ENCODE measurements at regions of chr12 and their contacts with region 1.

Region 1: GRCh38 chr12:52949413-52950331 is 754 bp downstream of the KRT18 start:
- DNase-seq: peak in 1 of 2 experiments; percentile 62
- H3K4me3 ChIP-seq: peak overlapping the region; percentile 88 to 98 (median 93)
- H3K27ac ChIP-seq: peak overlapping the region; percentile 83
- H3K4me1 ChIP-seq: peaks cover 18 to 38% (median 29%) of the 10 kb centered on the region in 4 experiments
- H3K27me3 ChIP-seq: no peaks in the 10 kb centered on the region
- CTCF ChIP-seq: no peak
- EP300 ChIP-seq: no peak
- POLR2A ChIP-seq: peak; percentile 73 to 85
- RAD21 ChIP-seq: peak in 1 of 2 experiments; percentile 3; a peak in 1 of 4 replicates

Region 2: GRCh38 chr12:52698651-52699340 is 250.9 kb before region 1 on chr12:
- CTCF ChIA-PET with region 1: no interaction called
- POLR2A ChIA-PET with region 1: no interaction called
- DNase-seq: no peak
- H3K4me3 ChIP-seq: no peak overlapping the region
- H3K27ac ChIP-seq: no peak overlapping the region
- H3K4me1 ChIP-seq: no peaks in the 10 kb centered on the region; a peak in 1 of 7 replicates
- H3K27me3 ChIP-seq: no peaks in the 10 kb centered on the region; a peak in 1 of 7 replicates
- CTCF ChIP-seq: no peak
- EP300 ChIP-seq: no peak
- POLR2A ChIP-seq: no peak
- RAD21 ChIP-seq: no peak

Region 3: DNA sequence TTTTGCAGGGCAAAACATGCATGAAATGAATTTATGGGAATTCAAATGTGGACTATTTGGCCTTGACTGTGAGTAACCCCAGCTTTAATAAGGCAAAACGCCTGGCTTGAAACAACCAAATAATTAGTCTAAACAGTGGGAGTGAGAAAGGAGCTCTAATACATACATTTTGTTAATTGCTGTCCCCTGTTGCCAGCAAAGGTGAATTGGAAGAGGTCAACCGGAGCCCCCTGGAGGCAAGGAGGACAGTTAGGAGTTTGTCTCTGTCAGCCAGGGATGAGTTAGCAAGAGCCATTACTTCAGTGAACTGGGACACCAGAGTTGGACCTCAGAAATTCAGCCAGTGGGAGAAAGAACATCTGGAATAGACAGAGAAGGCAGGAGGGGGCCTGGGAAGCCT is 190.0 kb before region 1 on chr12:
- CTCF ChIA-PET with region 1: no interaction called
- POLR2A ChIA-PET with region 1: no interaction called
- DNase-seq: no peak
- H3K4me3 ChIP-seq: no peak overlapping the region
- H3K27ac ChIP-seq: no peak overlapping the region
- H3K4me1 ChIP-seq: no peaks in the 10 kb centered on the region
- H3K27me3 ChIP-seq: no peaks in the 10 kb centered on the region; a peak in 1 of 7 replicates
- CTCF ChIP-seq: peak; percentile 23 to 42 (median 27)
- EP300 ChIP-seq: no peak
- POLR2A ChIP-seq: no peak
- RAD21 ChIP-seq: peak; percentile 34 to 46; a peak in 3 of 4 replicates

Region 4: GRCh38 chr12:52821826-52822660 is 127.6 kb before region 1 on chr12:
- CTCF ChIA-PET with region 1: no interaction called
- POLR2A ChIA-PET with region 1: no interaction called
- DNase-seq: no peak
- H3K4me3 ChIP-seq: no peak overlapping the region
- H3K27ac ChIP-seq: no peak overlapping the region
- H3K4me1 ChIP-seq: no peaks in the 10 kb centered on the region; a peak in 2 of 7 replicates
- H3K27me3 ChIP-seq: 0 out of 7 replicates have a peak, but pooled peaks cover 0 to 2% (median 0%) of the 10 kb centered on the region in 4 experiments
- CTCF ChIP-seq: no peak
- EP300 ChIP-seq: no peak
- POLR2A ChIP-seq: no peak
- RAD21 ChIP-seq: no peak

Region 5: GRCh38 chr12:52870351-52871290 is 79.1 kb before region 1 on chr12:
- CTCF ChIA-PET with region 1: no interaction called
- POLR2A ChIA-PET with region 1: no interaction called
- DNase-seq: peak in 1 of 2 experiments; percentile 98
- H3K4me3 ChIP-seq: no peak overlapping the region
- H3K27ac ChIP-seq: no peak overlapping the region
- H3K4me1 ChIP-seq: no peaks in the 10 kb centered on the region; a peak in 4 of 7 replicates
- H3K27me3 ChIP-seq: peaks cover 0 to 22% (median 12%) of the 10 kb centered on the region in 4 experiments; a peak in 5 of 7 replicates
- CTCF ChIP-seq: peak; percentile 86 to 98 (median 90)
- EP300 ChIP-seq: no peak
- POLR2A ChIP-seq: no peak
- RAD21 ChIP-seq: peak; percentile 96 to 98

Region 6: DNA sequence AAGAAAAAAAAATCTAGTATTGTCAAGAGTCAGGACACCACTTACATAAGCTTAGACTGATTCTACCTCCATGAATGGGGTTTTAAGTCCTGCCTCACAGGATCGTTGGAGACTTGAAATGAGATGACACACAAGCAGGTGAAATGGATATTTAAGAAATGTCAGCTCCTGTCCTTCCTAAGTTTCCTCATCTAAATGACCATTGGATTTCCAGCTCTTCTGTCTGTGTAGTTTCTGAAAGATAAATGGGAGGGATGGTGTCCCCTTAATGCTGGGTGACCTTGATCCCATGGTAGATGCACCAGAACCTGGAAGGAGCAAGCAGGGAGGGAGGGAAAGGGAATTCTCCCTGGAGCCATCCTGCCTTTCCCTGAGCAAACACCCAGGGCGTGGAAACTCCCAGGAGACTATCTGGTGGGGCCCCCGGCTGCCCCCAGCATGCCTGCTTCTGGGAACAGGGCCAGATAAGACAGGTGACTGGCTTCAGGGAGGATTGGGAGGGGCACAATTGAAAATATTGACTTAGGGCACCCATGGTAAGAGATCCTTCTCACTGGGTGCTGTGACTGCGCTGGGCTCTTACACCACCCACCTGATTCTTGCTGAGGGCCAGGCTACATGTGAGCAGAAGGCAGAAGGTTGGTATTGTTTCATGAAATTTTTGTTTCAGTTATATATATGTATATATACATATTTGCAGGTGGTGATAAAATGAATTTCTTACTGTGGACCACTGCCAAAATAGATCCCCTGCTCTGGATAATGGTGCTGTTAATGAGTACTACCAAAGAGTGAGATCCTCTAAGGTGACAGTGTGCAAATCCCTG is 54.4 kb before region 1 on chr12:
- CTCF ChIA-PET with region 1: interaction called, 314 read pairs
- POLR2A ChIA-PET with region 1: interaction called, 297 read pairs
- DNase-seq: no peak
- H3K4me3 ChIP-seq: no peak overlapping the region
- H3K27ac ChIP-seq: no peak overlapping the region
- H3K4me1 ChIP-seq: no peaks in the 10 kb centered on the region
- H3K27me3 ChIP-seq: no peaks in the 10 kb centered on the region
- CTCF ChIP-seq: no peak
- EP300 ChIP-seq: no peak
- POLR2A ChIP-seq: no peak
- RAD21 ChIP-seq: no peak

Region 7: DNA sequence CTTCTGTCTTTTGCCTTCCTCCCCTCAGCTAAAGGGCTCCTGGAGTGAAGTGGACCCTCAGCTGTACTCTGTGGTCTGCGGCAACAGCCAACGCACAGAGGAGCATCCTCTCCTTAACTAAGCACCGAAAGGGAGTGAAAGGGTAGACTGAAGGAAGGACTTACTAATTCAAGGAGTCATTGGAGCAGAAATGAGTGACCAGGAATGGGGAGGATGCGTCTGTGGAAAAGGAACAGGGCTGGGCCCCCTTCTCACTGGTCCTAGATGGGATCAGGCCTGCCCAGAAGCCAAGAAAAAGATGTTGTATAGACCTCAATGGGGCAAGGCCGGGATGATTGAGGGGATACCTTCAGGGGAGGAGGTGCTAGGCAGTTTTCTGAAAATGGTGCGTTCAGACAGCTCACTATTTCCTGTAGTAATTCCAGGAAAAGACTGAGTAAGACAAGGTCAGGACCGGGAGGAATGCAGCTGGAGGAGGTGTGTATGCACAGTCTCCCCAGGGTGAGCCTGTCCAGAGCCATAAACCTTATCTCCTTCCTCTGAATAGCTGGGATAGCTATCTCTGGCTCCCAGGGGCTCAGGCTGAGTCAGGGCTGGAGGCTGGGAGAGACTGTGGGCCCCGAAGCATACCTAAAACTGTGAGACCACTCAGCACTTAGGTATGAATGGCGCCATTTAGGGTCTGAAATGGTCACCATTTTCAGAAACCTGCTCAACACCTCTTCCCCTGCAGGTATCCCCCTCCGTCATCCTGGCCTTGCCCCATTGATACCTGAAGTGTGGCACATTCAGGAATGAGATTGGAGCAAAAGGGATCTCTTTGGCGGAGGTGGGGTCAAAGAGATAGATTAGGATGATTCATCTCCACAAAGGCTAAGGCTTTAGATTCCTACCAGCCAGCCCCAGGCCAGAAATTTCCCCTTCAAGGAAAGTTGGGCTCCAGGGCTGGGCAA is 24.6 kb before region 1 on chr12:
- CTCF ChIA-PET with region 1: interaction called, 19 read pairs
- POLR2A ChIA-PET with region 1: interaction called, 54 read pairs
- DNase-seq: no peak
- H3K4me3 ChIP-seq: no peak overlapping the region
- H3K27ac ChIP-seq: no peak overlapping the region
- H3K4me1 ChIP-seq: peaks cover 0 to 24% (median 9%) of the 10 kb centered on the region in 4 experiments; a peak in 6 of 7 replicates
- H3K27me3 ChIP-seq: no peaks in the 10 kb centered on the region
- CTCF ChIP-seq: no peak
- EP300 ChIP-seq: no peak
- POLR2A ChIP-seq: no peak
- RAD21 ChIP-seq: no peak

Region 8: GRCh38 chr12:52969828-52970569 is 20.3 kb after region 1 on chr12:
- CTCF ChIA-PET with region 1: interaction called, 23 read pairs
- POLR2A ChIA-PET with region 1: interaction called, 23 read pairs
- DNase-seq: no peak
- H3K4me3 ChIP-seq: no peak overlapping the region
- H3K27ac ChIP-seq: no peak overlapping the region
- H3K4me1 ChIP-seq: peaks cover 4 to 10% (median 7%) of the 10 kb centered on the region in 4 experiments
- H3K27me3 ChIP-seq: peaks cover 0 to 9% (median 5%) of the 10 kb centered on the region in 4 experiments; a peak in 3 of 7 replicates
- CTCF ChIP-seq: no peak
- EP300 ChIP-seq: no peak
- POLR2A ChIP-seq: no peak
- RAD21 ChIP-seq: no peak

Measured in H1 (cell line).